A549 (cell line): ENCODE measurements at regions of chr2 and their contacts with region 1.

Region 1: DNA sequence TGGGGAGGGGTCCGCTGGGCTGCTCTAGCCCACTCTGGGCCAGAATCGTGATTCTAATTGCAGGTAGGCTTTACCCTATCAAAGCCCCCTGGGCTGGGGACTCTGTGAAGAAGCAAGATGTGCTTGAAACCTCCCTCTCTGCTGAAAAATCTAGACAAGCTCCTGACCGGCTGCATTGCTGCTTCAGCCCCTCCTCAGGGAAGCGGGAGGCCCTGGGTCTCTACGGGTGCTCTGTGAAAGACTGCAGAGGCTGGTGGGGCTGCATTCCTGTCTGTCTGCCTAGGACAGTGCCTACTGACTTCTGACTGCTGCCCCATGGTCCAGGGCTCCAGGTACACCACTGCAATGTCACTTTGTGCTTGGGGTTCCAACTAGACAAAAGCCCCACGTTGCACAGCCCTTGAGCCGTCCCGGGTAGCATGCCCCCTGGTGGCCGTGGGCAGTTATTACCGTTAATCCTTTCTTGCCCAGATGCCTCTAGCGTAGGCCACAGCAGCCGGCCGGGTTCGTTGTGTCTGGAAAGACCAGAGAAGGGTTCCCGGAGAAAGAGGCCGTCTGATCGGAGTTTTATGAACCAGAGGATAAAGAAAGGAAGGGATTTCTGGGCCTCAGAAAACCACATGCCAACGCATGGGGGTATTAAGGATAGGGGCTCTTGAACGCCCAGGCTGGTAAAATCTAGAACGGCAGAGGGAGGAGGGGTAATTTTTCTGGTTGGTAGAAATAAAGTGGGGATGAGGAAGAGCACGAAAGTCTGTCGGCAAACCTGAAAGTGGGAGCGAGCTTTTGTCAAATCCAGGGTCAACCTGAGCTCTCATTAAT is 15.9 kb upstream of the C1QL2 start:
- DNase-seq: peak; percentile 41 to 58
- ATAC-seq: peak; percentile 79 to 96; a peak in 5 of 6 replicates
- H3K4me3 ChIP-seq: no peak overlapping the region
- H3K27ac ChIP-seq: no peak overlapping the region
- H3K4me1 ChIP-seq: 0 out of 3 replicates have a peak, but pooled peaks cover 2% of the 10 kb centered on the region
- CTCF ChIP-seq: peak; percentile 65
- EP300 ChIP-seq: no peak
- POLR2A ChIP-seq: no peak
- RAD21 ChIP-seq: peak; percentile 52 to 53; a peak in 3 of 5 replicates

Region 2: DNA sequence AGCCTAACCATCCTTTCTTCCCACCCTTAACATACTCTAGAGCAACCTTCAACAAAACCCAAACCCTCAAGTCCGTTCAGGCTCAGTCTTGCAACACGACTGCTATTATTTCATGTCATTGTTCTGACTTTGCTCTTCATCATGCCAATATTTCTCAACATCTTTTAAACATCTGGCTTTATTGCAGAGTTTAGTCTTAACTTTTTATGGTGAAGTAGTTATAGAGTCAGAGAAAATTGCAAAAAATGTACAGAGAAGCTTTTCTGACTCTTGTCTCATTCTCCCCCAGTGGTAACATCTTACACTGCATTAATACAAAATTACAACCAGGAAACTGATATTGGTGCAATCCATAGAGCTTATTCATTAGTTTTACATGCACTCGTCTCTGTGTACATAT is 228.5 kb before region 1 on chr2:
- CTCF ChIA-PET with region 1: no interaction called
- POLR2A ChIA-PET with region 1: no interaction called
- DNase-seq: no peak
- ATAC-seq: no peak
- H3K4me3 ChIP-seq: no peak overlapping the region
- H3K27ac ChIP-seq: no peak overlapping the region
- H3K4me1 ChIP-seq: no peaks in the 10 kb centered on the region
- CTCF ChIP-seq: no peak
- EP300 ChIP-seq: no peak
- POLR2A ChIP-seq: no peak
- RAD21 ChIP-seq: no peak

Region 3: DNA sequence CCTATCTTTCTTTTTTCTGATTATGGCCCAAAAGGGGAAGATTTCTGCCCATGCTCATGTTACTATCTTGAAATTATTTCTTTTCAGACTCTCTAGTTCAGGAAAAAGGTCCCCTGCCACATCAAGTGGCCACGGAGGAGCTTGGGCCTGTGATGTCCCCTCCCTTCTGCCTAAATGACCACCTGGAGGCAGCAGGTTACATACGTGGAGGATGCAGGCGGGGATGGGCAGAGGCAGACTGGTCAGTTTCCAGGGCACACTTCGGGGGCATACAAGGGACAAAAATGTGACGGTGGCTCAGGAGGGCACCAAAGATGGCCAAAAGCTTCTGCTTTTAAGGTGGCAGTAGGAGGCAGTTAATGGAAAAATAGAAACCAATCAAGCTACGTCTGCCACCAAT is 18.5 kb after region 1 on chr2:
- CTCF ChIA-PET with region 1: interaction called, 11 read pairs
- POLR2A ChIA-PET with region 1: no interaction called
- DNase-seq: no peak
- ATAC-seq: no peak
- H3K4me3 ChIP-seq: no peak overlapping the region
- H3K27ac ChIP-seq: no peak overlapping the region
- H3K4me1 ChIP-seq: peaks cover 16% of the 10 kb centered on the region
- CTCF ChIP-seq: no peak
- EP300 ChIP-seq: no peak
- POLR2A ChIP-seq: no peak
- RAD21 ChIP-seq: no peak